ENCODE measurements at regions of chr13 and their contacts with region 1.

Region 1: GRCh38 chr13:24053519-24054251 is 106.8 kb upstream of the SPATA13 start:
- DNase-seq: peak; percentile 51 to 63 (median 56)
- H3K4me3 ChIP-seq: no peak overlapping the region
- H3K4me3 Mint-ChIP-seq: no peak overlapping the region
- H3K27ac ChIP-seq: no peak overlapping the region
- H3K27ac Mint-ChIP-seq: peak overlapping the region in 2 of 7 donors; percentile 5 to 48
- H3K4me1 ChIP-seq: no peaks in the 10 kb centered on the region
- H3K4me1 Mint-ChIP-seq: peaks cover 2 to 9% (median 5%) of the 10 kb centered on the region in 4 donors
- H3K27me3 ChIP-seq: no peaks in the 10 kb centered on the region
- H3K27me3 Mint-ChIP-seq: peaks cover 6 to 23% of the 10 kb centered on the region in 2 donors

Region 2: DNA sequence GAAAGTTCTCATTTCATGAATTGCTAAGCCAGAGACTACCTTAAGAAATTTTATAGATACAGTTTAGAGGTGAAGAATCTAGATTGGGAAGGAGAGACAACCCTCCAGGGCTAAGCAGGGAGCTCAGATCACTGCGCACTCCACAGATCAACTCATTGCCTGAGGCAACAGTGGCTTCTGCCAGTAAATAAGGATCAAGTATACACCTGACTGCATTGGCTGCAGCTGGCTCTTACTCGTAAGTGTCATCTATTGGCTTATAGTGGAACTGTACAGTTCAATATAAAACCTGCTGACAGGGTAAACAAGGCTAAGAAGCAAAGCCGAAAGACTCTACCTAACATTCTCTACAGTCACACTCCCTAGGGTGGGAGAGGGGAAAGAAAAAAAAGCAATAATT is 138.4 kb before region 1 on chr13:
- CTCF ChIA-PET with region 1: no interaction called
- POLR2A ChIA-PET with region 1: no interaction called
- intact Hi-C with region 1: no loop called
- DNase-seq: no peak
- H3K4me3 ChIP-seq: no peak overlapping the region
- H3K4me3 Mint-ChIP-seq: no peak overlapping the region
- H3K27ac ChIP-seq: no peak overlapping the region
- H3K27ac Mint-ChIP-seq: no peak overlapping the region
- H3K4me1 ChIP-seq: no peaks in the 10 kb centered on the region
- H3K4me1 Mint-ChIP-seq: peaks cover 0 to 5% (median 0%) of the 10 kb centered on the region in 4 donors
- H3K27me3 ChIP-seq: no peaks in the 10 kb centered on the region
- H3K27me3 Mint-ChIP-seq: peaks cover 15 to 35% of the 10 kb centered on the region in 2 donors

Region 3: GRCh38 chr13:23966691-23967615 is 86.7 kb before region 1 on chr13:
- CTCF ChIA-PET with region 1: no interaction called
- POLR2A ChIA-PET with region 1: no interaction called
- intact Hi-C with region 1: loop called (anchors 5 kb)
- DNase-seq: peak; percentile 49 to 63 (median 60)
- H3K4me3 ChIP-seq: peak overlapping the region; percentile 37 to 76
- H3K4me3 Mint-ChIP-seq: peak overlapping the region; percentile 74 to 93 (median 84)
- H3K27ac ChIP-seq: peak overlapping the region; percentile 68
- H3K27ac Mint-ChIP-seq: peak overlapping the region; percentile 80 to 97 (median 94)
- H3K4me1 ChIP-seq: peaks cover 10% of the 10 kb centered on the region
- H3K4me1 Mint-ChIP-seq: peaks cover 10 to 28% (median 18%) of the 10 kb centered on the region in 4 donors
- H3K27me3 ChIP-seq: no peaks in the 10 kb centered on the region
- H3K27me3 Mint-ChIP-seq: no peaks in the 10 kb centered on the region

Region 4: GRCh38 chr13:24039621-24040475 is 13.8 kb before region 1 on chr13:
- CTCF ChIA-PET with region 1: interaction called, 10 read pairs
- POLR2A ChIA-PET with region 1: no interaction called
- intact Hi-C with region 1: no loop called
- DNase-seq: no peak
- H3K4me3 ChIP-seq: no peak overlapping the region
- H3K4me3 Mint-ChIP-seq: no peak overlapping the region
- H3K27ac ChIP-seq: no peak overlapping the region
- H3K27ac Mint-ChIP-seq: no peak overlapping the region
- H3K4me1 ChIP-seq: no peaks in the 10 kb centered on the region
- H3K4me1 Mint-ChIP-seq: no peaks in the 10 kb centered on the region
- H3K27me3 ChIP-seq: no peaks in the 10 kb centered on the region
- H3K27me3 Mint-ChIP-seq: peaks cover 0 to 5% of the 10 kb centered on the region in 2 donors

Region 5: DNA sequence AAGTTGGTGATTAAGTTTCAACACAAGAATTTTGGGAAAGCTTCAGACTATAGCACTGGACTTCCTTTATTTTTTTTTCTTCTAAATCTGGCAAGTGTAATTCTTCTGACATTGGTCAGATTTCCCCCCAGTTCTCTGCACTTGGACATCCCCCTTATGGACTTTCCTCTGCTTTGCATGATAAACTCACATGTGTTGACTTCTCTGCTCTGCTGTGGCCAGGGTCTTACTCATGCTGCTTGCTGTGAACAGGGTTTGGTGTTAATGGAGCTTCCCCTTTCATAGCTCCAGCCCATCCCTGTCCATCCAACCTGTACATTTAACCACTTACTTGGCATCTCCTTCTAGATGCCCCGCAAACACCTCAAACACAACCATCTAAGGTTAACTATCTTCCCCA is 36.4 kb after region 1 on chr13:
- CTCF ChIA-PET with region 1: no interaction called
- POLR2A ChIA-PET with region 1: no interaction called
- intact Hi-C with region 1: no loop called
- DNase-seq: no peak
- H3K4me3 ChIP-seq: no peak overlapping the region
- H3K4me3 Mint-ChIP-seq: no peak overlapping the region
- H3K27ac ChIP-seq: no peak overlapping the region
- H3K27ac Mint-ChIP-seq: no peak overlapping the region
- H3K4me1 ChIP-seq: no peaks in the 10 kb centered on the region
- H3K4me1 Mint-ChIP-seq: no peaks in the 10 kb centered on the region
- H3K27me3 ChIP-seq: no peaks in the 10 kb centered on the region
- H3K27me3 Mint-ChIP-seq: peaks cover 2 to 6% of the 10 kb centered on the region in 2 donors

Region 6: GRCh38 chr13:24153979-24154701 is 100.5 kb after region 1 on chr13:
- CTCF ChIA-PET with region 1: no interaction called
- POLR2A ChIA-PET with region 1: no interaction called
- intact Hi-C with region 1: no loop called
- DNase-seq: no peak
- H3K4me3 ChIP-seq: no peak overlapping the region
- H3K4me3 Mint-ChIP-seq: no peak overlapping the region
- H3K27ac ChIP-seq: no peak overlapping the region
- H3K27ac Mint-ChIP-seq: no peak overlapping the region
- H3K4me1 ChIP-seq: no peaks in the 10 kb centered on the region
- H3K4me1 Mint-ChIP-seq: no peaks in the 10 kb centered on the region
- H3K27me3 ChIP-seq: no peaks in the 10 kb centered on the region
- H3K27me3 Mint-ChIP-seq: peaks cover 2 to 7% of the 10 kb centered on the region in 2 donors

Measured in CD4-positive, alpha-beta memory T cell (primary cell).